B cell (primary cell): ENCODE measurements at regions of chr20 and their contacts with region 1.

Region 1: GRCh38 chr20:59403261-59403961 is 103.0 kb downstream of the EDN3 start:
- DNase-seq: peak; percentile 56
- ATAC-seq: peak; percentile 45
- H3K4me3 ChIP-seq: no peak overlapping the region
- H3K4me3 Mint-ChIP-seq: no peak overlapping the region
- H3K27ac ChIP-seq: no peak overlapping the region
- H3K27ac Mint-ChIP-seq: no peak overlapping the region
- H3K4me1 ChIP-seq: peaks cover 18 to 20% of the 10 kb centered on the region in 2 donors
- H3K4me1 Mint-ChIP-seq: peaks cover 5% of the 10 kb centered on the region
- H3K27me3 ChIP-seq: peaks cover 0 to 52% (median 30%) of the 10 kb centered on the region in 4 experiments
- H3K27me3 Mint-ChIP-seq: peaks cover 34% of the 10 kb centered on the region
- CTCF ChIP-seq: peak; percentile 88

Region 2: GRCh38 chr20:59055295-59055694 is 348.1 kb before region 1 on chr20:
- CTCF ChIA-PET with region 1: no interaction called
- POLR2A ChIA-PET with region 1: no interaction called
- intact Hi-C with region 1: loop called (anchors 10 kb)
- DNase-seq: peak; percentile 59
- ATAC-seq: peak; percentile 28
- H3K4me3 ChIP-seq: no peak overlapping the region
- H3K4me3 Mint-ChIP-seq: no peak overlapping the region
- H3K27ac ChIP-seq: no peak overlapping the region
- H3K27ac Mint-ChIP-seq: no peak overlapping the region
- H3K4me1 ChIP-seq: no peaks in the 10 kb centered on the region
- H3K4me1 Mint-ChIP-seq: no peaks in the 10 kb centered on the region
- H3K27me3 ChIP-seq: peaks cover 0 to 17% (median 9%) of the 10 kb centered on the region in 4 experiments
- H3K27me3 Mint-ChIP-seq: peaks cover 38% of the 10 kb centered on the region
- CTCF ChIP-seq: peak; percentile 67

Region 3: GRCh38 chr20:59518881-59519688 is 115.7 kb after region 1 on chr20:
- CTCF ChIA-PET with region 1: no interaction called
- POLR2A ChIA-PET with region 1: no interaction called
- intact Hi-C with region 1: no loop called
- DNase-seq: peak; percentile 48
- ATAC-seq: peak; percentile 31
- H3K4me3 ChIP-seq: no peak overlapping the region
- H3K4me3 Mint-ChIP-seq: no peak overlapping the region
- H3K27ac ChIP-seq: no peak overlapping the region
- H3K27ac Mint-ChIP-seq: no peak overlapping the region
- H3K4me1 ChIP-seq: no peaks in the 10 kb centered on the region
- H3K4me1 Mint-ChIP-seq: no peaks in the 10 kb centered on the region
- H3K27me3 ChIP-seq: peaks cover 0 to 17% (median 5%) of the 10 kb centered on the region in 4 experiments
- H3K27me3 Mint-ChIP-seq: peaks cover 51% of the 10 kb centered on the region
- CTCF ChIP-seq: peak; percentile 92